Naive thymus-derived CD4-positive, alpha-beta T cell (primary cell): ENCODE measurements at regions of chr6 and their contacts with region 1.

Region 1: DNA sequence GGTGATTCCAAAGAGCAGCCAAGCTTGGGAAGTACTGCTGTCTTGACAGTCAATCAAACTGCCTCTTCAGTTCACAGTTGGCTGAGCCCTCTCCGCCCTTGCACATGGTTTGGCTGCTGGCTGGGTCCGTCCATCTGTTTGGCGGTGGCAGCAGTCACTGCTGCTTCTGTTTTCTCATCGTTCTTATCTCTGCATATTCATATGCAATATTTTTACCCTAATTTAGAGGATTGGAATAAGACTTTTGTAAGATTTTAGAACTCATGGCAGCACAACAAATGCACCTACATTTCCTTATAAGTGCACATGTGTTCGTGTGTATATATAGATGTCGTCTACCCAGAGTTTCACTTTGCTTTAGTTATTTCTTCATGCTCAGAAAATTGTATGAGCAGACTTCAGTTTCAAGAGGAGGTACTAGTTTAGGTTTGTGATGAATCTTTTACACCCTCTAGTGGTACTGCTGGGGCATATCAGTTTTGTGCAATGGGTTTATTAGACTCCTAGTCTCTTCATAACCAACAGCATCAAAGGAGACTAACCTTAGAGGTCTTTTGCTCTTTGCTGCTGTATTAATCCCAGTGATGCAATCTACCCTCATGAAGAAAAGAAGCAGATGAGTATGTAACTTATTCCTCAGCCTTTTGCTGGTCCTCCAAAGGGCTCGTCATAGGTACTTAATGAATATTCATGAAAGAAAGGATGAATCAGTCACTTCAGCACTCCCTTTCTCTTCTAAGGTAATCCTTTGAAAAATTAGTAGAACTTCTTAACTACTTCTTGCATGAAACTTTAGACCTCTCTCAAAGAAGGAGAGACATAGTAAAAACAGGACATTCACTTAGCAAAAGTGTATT is 44.3 kb downstream of the KHDC1L start:
- DNase-seq: peak in 6 of 9 donors; percentile 29 to 62 (median 44)
- ATAC-seq: peak; percentile 92
- H3K4me3 ChIP-seq: no peak overlapping the region
- H3K4me3 Mint-ChIP-seq: peak overlapping the region in 9 of 10 donors; percentile 12 to 69 (median 47)
- H3K27ac ChIP-seq: no peak overlapping the region
- H3K27ac Mint-ChIP-seq: peak overlapping the region in 1 of 9 donors; percentile 17
- H3K4me1 ChIP-seq: no peaks in the 10 kb centered on the region
- H3K4me1 Mint-ChIP-seq: peaks cover 4 to 11% (median 5%) of the 10 kb centered on the region in 7 donors
- H3K27me3 ChIP-seq: no peaks in the 10 kb centered on the region
- H3K27me3 Mint-ChIP-seq: no peaks in the 10 kb centered on the region

Region 2: GRCh38 chr6:72522719-72523141 is 658.3 kb before region 1 on chr6:
- CTCF ChIA-PET with region 1: no interaction called
- POLR2A ChIA-PET with region 1: no interaction called
- intact Hi-C with region 1: loop called in 1 of 2 experiments (anchors 2 kb)
- DNase-seq: peak in 8 of 9 donors; percentile 7 to 54 (median 22)
- ATAC-seq: no peak
- H3K4me3 ChIP-seq: no peak overlapping the region
- H3K4me3 Mint-ChIP-seq: no peak overlapping the region
- H3K27ac ChIP-seq: no peak overlapping the region
- H3K27ac Mint-ChIP-seq: no peak overlapping the region
- H3K4me1 ChIP-seq: no peaks in the 10 kb centered on the region
- H3K4me1 Mint-ChIP-seq: no peaks in the 10 kb centered on the region
- H3K27me3 ChIP-seq: peaks cover 0 to 3% of the 10 kb centered on the region in 2 donors
- H3K27me3 Mint-ChIP-seq: peaks cover 0 to 13% (median 4%) of the 10 kb centered on the region in 5 donors

Region 3: GRCh38 chr6:72616406-72617015 is 564.5 kb before region 1 on chr6:
- CTCF ChIA-PET with region 1: interaction called, 3 read pairs
- POLR2A ChIA-PET with region 1: no interaction called
- intact Hi-C with region 1: loop called (anchors 1 to 2 kb)
- DNase-seq: peak in 5 of 9 donors; percentile 40 to 58 (median 49)
- ATAC-seq: no peak
- H3K4me3 ChIP-seq: no peak overlapping the region
- H3K4me3 Mint-ChIP-seq: peak overlapping the region in 4 of 10 donors; percentile 12 to 32 (median 22)
- H3K27ac ChIP-seq: no peak overlapping the region
- H3K27ac Mint-ChIP-seq: peak overlapping the region in 7 of 9 donors; percentile 37 to 80 (median 71)
- H3K4me1 ChIP-seq: peaks cover 18 to 21% of the 10 kb centered on the region in 2 donors
- H3K4me1 Mint-ChIP-seq: peaks cover 23 to 70% (median 52%) of the 10 kb centered on the region in 7 donors
- H3K27me3 ChIP-seq: no peaks in the 10 kb centered on the region
- H3K27me3 Mint-ChIP-seq: no peaks in the 10 kb centered on the region

Region 4: DNA sequence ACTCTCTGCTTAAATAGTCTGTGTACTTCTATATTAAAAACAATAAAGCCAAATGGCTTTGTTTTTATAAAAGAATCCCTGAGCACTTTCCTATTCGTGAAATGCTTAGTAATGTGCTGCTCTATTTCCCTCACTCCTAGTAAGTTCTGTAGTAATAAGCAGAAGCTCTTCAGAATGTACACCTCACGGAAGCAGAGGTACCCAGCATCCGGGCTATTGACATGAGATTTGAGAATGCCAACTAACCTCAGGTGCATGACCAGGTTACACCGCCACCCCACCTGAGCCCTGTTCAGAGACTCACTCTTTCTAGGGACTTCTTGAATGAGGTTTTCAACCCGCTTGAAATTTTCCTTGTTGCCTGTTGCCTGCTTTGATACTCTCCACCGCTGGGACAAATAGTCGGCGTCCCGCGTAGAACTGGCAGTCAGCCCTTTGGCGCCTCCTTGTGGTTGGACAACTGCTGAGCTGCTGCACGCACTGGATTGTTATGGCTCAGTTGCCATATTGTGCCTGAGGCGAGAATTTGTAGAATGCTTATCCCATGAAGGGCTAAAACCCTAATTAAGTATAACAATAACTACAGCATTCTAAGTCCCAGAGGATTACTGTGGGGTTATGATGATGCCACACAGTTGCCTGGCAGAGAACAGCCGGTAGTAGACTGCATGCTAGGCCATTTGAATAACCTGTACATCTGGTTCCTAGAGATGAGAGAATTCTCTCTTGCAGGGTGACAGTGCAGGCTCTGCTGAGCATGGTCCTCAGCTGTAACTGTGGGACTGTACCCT is 51.1 kb before region 1 on chr6:
- CTCF ChIA-PET with region 1: no interaction called
- POLR2A ChIA-PET with region 1: no interaction called
- intact Hi-C with region 1: loop called (anchors 1 to 2 kb)
- DNase-seq: peak; percentile 52 to 85 (median 77)
- ATAC-seq: peak; percentile 93
- H3K4me3 ChIP-seq: no peak overlapping the region
- H3K4me3 Mint-ChIP-seq: peak overlapping the region in 8 of 10 donors; percentile 23 to 71 (median 52)
- H3K27ac ChIP-seq: no peak overlapping the region
- H3K27ac Mint-ChIP-seq: peak overlapping the region in 1 of 9 donors; percentile 48
- H3K4me1 ChIP-seq: no peaks in the 10 kb centered on the region
- H3K4me1 Mint-ChIP-seq: peaks cover 0 to 6% (median 3%) of the 10 kb centered on the region in 7 donors
- H3K27me3 ChIP-seq: no peaks in the 10 kb centered on the region
- H3K27me3 Mint-ChIP-seq: peaks cover 0 to 4% (median 0%) of the 10 kb centered on the region in 5 donors

Region 5: GRCh38 chr6:73145690-73146089 is 35.3 kb before region 1 on chr6:
- CTCF ChIA-PET with region 1: no interaction called
- POLR2A ChIA-PET with region 1: no interaction called
- intact Hi-C with region 1: no loop called
- DNase-seq: no peak
- ATAC-seq: no peak
- H3K4me3 ChIP-seq: no peak overlapping the region
- H3K4me3 Mint-ChIP-seq: no peak overlapping the region
- H3K27ac ChIP-seq: no peak overlapping the region
- H3K27ac Mint-ChIP-seq: no peak overlapping the region
- H3K4me1 ChIP-seq: no peaks in the 10 kb centered on the region
- H3K4me1 Mint-ChIP-seq: no peaks in the 10 kb centered on the region
- H3K27me3 ChIP-seq: no peaks in the 10 kb centered on the region
- H3K27me3 Mint-ChIP-seq: no peaks in the 10 kb centered on the region

Region 6: DNA sequence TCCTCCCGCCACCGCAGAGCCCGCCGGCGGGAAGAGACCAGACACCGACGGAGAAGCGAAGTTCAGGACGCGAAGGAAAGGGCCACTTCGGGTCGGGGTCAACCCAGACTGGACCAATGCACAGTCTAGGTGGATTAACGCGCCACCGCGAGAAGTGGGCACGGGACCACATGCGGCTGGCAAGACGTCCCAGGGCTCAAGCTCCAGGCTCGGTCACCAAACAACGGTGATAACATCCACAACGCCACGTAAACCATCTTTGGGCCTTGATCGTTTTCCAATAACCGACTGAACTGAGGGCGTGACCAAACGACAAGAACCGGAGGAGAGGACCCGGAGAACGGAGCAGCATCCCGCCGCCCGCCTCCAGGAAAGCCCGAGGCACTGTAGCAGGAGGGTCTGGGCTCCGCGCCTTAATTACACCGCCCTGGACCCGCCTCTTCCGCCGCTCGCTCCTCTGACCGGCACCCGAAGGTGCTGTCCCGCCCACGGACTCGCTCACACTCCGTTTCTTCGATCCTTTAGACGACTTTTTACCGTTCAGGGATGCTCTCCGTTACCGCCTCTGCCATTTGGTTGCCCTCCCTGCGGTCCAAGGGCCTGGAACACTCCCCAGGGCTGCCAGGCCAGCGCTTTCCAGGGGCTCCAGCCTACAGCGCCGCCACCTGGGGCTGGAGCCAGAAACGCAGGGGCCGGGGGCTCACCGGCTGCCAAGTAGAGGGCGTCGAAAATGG is 128.9 kb after region 1 on chr6:
- CTCF ChIA-PET with region 1: no interaction called
- POLR2A ChIA-PET with region 1: no interaction called
- intact Hi-C with region 1: no loop called
- DNase-seq: peak in 7 of 9 donors; percentile 6 to 70 (median 25)
- ATAC-seq: peak; percentile 85
- H3K4me3 ChIP-seq: peak overlapping the region; percentile 76
- H3K4me3 Mint-ChIP-seq: peak overlapping the region; percentile 87 to 99 (median 92)
- H3K27ac ChIP-seq: no peak overlapping the region
- H3K27ac Mint-ChIP-seq: peak overlapping the region in 5 of 9 donors; percentile 17 to 93 (median 34)
- H3K4me1 ChIP-seq: peaks cover 4 to 6% of the 10 kb centered on the region in 2 donors
- H3K4me1 Mint-ChIP-seq: peaks cover 12 to 39% (median 16%) of the 10 kb centered on the region in 7 donors
- H3K27me3 ChIP-seq: peaks cover 0 to 5% of the 10 kb centered on the region in 2 donors
- H3K27me3 Mint-ChIP-seq: peaks cover 34 to 51% (median 46%) of the 10 kb centered on the region in 5 donors